ENCODE measurements at regions of chr12 and their contacts with region 1.

Region 1: GRCh38 chr12:111396726-111397445 is 8.8 kb upstream of the SH2B3 start:
- DNase-seq: peak; percentile 96
- H3K4me3 Mint-ChIP-seq: peak overlapping the region; percentile 78
- H3K27ac Mint-ChIP-seq: peak overlapping the region; percentile 70
- H3K4me1 Mint-ChIP-seq: peaks cover 32% of the 10 kb centered on the region
- H3K27me3 Mint-ChIP-seq: peaks cover 4% of the 10 kb centered on the region

Region 2: GRCh38 chr12:111444925-111445725 is 48.2 kb after region 1 on chr12:
- intact Hi-C with region 1: loop called (anchors 1 kb)
- DNase-seq: peak; percentile 96
- H3K4me3 Mint-ChIP-seq: peak overlapping the region; percentile 71
- H3K27ac Mint-ChIP-seq: peak overlapping the region; percentile 88
- H3K4me1 Mint-ChIP-seq: peaks cover 82% of the 10 kb centered on the region
- H3K27me3 Mint-ChIP-seq: no peaks in the 10 kb centered on the region

Region 3: GRCh38 chr12:111482462-111482861 is 85.6 kb after region 1 on chr12:
- intact Hi-C with region 1: loop called (anchors 1 kb)
- DNase-seq: no peak
- H3K4me3 Mint-ChIP-seq: no peak overlapping the region
- H3K27ac Mint-ChIP-seq: no peak overlapping the region
- H3K4me1 Mint-ChIP-seq: no peaks in the 10 kb centered on the region
- H3K27me3 Mint-ChIP-seq: no peaks in the 10 kb centered on the region

Region 4: DNA sequence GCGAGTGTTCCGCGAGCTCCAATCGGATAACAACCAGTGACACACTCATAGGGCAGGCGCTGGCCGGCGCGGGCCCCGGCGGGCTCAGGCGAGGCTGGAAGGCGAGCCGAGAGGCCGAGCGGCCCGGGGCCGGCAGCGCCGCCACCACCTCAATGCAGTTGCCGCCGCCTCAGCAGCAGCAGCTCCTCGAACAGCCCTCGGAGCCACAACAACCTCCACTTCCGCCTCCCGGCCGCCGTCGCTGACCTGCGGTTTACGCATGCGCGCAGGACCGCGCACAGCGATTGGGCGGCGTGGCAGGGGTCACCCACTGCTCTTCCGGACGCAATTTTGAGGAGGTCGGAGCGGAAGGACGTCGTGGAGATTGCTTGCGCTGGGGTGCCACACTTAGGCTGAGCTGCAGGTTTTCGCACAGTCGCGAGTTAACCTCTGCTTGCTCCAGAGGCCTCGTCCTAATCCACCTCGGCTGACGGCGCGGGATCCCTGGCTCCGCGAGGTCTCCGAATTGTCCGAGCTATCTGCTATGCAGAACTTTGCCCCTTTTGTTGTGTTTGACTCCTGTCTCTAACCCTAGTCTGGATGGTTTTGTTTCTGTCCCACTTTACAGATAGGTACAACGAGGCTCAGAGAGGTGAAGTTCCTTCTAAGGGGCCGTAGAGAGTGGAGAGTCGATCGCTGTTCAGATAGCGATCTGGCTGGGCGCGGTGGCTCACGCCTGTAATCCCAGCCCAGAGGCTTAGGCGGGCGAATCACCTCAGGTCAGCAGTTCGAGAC is 289.0 kb after region 1 on chr12 and contains the starts of genes ACAD10 and BRAP:
- intact Hi-C with region 1: loop called (anchors 5 kb)
- DNase-seq: peak; percentile 99
- H3K4me3 Mint-ChIP-seq: peak within 1 kb of the TSS; percentile 99
- H3K27ac Mint-ChIP-seq: peak within 1 kb of the TSS; percentile 96
- H3K4me1 Mint-ChIP-seq: peaks cover 28% of the 10 kb centered on the region
- H3K27me3 Mint-ChIP-seq: no peaks in the 10 kb centered on the region
- total RNA-seq, gene ACAD10: 28.2 and 28.6 TPM in 2 replicates
- total RNA-seq, gene BRAP: 20.3 TPM in 2 replicates